Motor neuron (in vitro differentiated cells): ENCODE measurements at regions of chr2 and their contacts with region 1.

Region 1: DNA sequence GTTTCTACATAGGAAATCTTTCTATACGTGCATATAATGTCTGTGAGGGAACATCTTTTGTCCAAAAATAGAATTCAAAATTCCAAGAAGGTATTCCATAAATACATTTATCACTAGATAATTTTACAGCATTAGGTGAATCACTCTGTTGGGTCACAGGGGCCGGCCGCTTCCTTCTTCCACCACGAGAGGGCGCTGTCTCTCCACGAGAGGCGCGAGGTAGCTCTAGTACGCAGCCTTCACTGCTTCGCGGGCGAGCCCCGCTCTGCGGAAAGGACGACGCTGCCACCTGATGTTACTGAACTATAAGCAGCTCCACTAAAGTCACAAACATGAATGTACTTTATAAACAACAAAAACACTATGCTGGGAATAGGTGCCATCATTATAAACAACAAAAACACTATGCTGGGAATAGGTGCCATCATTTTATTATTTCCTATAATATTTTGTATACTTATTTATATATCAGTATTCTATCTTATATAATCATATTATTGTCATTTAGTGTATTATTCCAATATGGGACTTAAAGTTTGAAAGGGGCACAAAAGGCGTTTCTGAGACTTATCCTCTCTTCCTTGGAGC is 69.4 kb upstream of the REV1 start:
- ATAC-seq: peak; percentile 48 to 99 (median 97)
- H3K4me3 ChIP-seq: no peak overlapping the region
- H3K27ac ChIP-seq: no peak overlapping the region
- H3K4me1 ChIP-seq: peaks cover 0 to 7% of the 10 kb centered on the region in 2 donors

Region 2: DNA sequence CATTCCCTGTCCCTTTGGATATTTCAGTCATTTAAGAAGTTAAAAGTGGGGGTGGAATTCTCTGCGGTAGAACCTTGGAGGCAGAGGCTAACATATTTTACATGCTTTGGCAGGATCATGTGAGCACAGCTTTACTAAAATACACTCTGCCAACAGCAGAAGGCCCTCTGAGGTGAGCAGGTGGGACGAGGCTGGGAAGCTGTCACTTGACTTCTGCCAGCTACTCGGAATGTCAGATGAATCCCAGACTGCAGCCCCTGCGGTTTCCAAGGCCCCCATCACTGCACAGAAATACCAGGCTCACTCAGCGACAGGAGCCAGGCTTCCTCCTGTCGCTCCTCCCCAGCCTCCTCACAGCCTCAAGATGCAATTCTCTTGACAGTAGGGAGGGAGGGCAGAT is 151.6 kb after region 1 on chr2:
- in situ Hi-C with region 1: loop called in 2 of 9 experiments (anchors 25 kb)
- ATAC-seq: peak in 2 of 8 experiments; percentile 27 to 56
- H3K4me3 ChIP-seq: no peak overlapping the region
- H3K27ac ChIP-seq: no peak overlapping the region
- H3K4me1 ChIP-seq: peaks cover 0 to 14% of the 10 kb centered on the region in 2 donors

Region 3: DNA sequence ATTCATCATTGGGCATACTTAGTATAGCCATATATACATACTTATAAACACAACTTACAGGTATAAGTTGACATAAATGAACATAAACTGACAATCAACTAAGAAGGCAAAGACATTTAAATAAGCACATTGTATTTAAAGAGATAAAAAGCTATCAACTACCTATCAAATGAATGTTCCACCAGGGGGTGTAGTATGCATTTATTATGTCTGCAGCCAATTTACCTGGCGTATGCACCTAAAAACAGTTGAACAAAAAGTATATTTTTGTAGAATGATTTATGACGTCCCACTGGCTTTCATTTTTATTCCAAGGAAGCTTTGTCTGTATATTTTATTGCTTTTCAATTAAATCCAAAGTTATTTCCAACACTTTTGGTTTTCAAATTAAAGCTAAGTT is 259.7 kb after region 1 on chr2:
- in situ Hi-C with region 1: loop called in 1 of 9 experiments (anchors 25 kb)
- ATAC-seq: no peak
- H3K4me3 ChIP-seq: no peak overlapping the region
- H3K27ac ChIP-seq: no peak overlapping the region
- H3K4me1 ChIP-seq: peaks cover 15 to 19% of the 10 kb centered on the region in 2 donors

Region 4: DNA sequence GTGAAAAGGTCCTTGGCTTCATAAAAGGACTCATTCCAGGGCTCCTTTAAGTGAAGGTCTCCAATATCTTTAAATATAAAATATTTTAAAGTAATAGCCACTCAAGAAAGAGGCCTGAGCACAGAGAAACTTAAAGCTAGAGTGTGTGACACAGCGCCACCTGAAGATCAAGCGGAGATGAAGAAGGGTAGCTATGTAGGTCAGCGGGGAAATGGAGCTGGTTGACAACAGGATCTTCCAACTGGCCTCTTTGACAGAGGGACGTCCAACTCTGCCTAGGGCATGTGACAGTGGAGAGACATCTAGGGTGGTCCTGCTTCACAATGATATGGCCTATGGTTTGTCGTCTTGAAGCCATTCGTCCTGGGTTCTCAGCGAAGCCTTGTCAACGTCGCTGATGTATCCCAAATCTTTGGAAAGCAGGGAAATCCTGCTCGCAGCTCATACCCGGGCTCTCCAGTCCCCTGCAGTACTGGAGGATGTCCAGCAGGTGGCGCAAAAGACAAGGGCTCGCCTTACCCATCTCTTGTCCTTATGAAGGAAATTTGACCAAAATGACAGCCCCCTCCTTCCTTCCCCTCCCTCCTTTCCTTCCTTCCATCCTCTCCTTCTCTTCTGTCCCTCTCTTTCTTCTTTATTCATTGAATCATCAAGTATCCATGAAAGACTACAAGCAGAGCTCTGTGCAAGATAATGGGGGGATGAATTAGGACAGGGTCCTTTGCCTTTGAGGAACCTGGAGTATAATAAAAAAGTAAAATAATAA is 703.6 kb after region 1 on chr2:
- in situ Hi-C with region 1: loop called in 5 of 9 experiments (anchors 10 to 25 kb)
- ATAC-seq: peak; percentile 42 to 86 (median 64)
- H3K4me3 ChIP-seq: peak overlapping the region in 1 of 5 donors; percentile 4
- H3K27ac ChIP-seq: no peak overlapping the region
- H3K4me1 ChIP-seq: peaks cover 2 to 6% of the 10 kb centered on the region in 2 donors

Region 5: DNA sequence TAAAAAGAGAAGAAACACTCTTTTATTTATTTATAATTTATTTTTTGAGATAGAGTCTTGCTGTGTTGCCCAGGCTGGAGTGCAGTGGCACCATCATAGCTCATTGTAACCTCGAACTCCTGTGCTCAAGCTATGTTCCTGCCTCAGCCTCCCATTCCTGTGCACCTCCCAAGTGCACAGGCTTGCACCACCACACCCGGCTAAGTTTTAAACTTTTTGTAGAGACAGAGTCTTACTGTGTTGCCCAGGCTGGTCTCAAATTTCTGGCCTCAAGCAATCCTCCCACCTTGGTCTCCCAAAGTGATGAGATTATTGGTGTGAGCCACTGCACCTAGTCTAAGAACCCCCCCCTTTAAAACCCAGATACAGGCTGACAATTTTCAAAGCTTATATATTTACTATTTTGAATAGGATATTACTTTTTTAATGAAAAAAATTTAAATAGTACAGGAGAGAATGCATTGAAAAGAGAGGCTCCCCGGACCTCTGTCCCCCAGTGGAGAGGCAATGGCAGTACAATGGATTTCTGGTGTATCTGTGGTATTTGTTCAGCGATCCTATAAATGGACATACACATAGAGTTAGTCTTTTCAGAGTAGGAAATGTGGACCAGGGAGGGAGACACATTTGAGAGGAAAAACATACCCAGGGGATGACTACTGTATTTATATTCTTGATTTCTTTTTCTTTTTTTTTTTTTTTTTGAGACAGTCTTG is 1645.4 kb after region 1 on chr2:
- in situ Hi-C with region 1: no loop called
- ATAC-seq: no peak
- H3K4me3 ChIP-seq: no peak overlapping the region
- H3K27ac ChIP-seq: no peak overlapping the region
- H3K4me1 ChIP-seq: no peaks in the 10 kb centered on the region